Upper lobe of right lung (tissue), 1 donor: ENCODE measurements at regions of chr3 and their contacts with region 1.

Region 1: DNA sequence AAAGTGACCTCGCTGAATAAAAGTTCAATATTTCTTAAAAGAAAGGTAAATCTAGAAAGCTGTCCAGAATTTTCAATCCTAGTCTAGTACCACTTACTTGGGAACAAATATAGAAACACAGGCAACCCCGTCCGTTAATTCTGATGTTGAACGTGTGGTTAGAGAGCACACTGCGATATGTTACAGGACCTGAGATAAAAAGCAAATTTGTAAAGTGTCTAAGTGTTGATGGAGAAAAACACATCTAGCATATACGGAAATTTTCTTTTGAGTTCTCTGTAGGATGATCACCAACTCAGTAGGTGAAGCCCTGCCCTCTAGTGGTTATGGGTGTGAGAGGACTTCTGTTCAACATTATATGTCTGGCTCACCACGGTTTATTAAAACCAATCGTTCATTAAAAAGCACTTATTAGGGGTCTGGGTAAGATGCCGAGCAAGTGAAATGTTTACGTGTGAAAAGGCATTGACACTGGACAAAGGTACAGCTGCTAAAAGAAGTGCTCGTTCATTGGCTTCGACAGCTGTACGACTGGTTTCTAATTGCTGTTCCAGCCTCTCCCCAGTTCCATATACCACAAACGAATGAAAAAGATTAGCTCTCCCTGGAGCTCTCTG is 1.0 kb upstream of the ATP2C1 start:
- DNase-seq: no peak
- ATAC-seq: peak; percentile 73
- H3K4me3 ChIP-seq: peak overlapping the region; percentile 91
- H3K27ac ChIP-seq: peak overlapping the region; percentile 98
- H3K4me1 ChIP-seq: peaks cover 17% of the 10 kb centered on the region
- H3K27me3 ChIP-seq: no peaks in the 10 kb centered on the region
- CTCF ChIP-seq: peak; percentile 87

Region 2: DNA sequence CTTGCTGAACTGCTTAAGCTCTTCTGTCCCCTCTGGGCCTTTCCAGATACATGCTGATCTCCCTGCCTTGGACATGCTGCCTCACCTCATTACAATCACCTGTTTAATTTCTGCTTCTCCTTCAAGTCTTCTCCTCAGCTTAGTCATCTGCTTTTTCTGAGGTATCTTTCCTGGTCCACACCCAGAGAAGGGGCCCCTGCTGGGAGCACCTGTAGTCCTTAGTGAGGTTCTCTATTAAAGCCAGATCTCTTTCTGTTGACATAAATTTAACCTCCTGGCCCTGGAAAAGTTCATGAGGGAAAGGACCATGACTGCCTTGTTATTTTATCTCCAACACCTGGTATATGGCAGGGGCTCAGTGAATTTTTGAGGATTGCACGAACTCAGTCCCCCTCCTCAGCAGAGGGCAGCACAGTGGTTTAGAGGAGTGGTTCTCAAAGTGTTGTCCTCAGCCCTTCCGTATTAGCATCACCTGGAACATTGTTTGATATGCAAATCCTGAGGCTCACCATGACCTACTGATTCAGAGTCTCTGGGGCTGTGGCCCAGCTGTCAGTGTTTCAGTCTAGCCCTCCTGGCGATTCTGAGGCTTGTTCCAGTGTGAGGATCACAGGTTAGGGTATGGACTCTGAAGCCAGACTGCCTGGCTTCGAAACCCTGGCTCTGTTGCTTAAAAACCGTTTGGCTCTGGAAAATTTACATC is 363.2 kb before region 1 on chr3:
- intact Hi-C with region 1: no loop called
- DNase-seq: no peak
- ATAC-seq: no peak
- H3K4me3 ChIP-seq: no peak overlapping the region
- H3K27ac ChIP-seq: no peak overlapping the region
- H3K4me1 ChIP-seq: no peaks in the 10 kb centered on the region
- H3K27me3 ChIP-seq: no peaks in the 10 kb centered on the region
- CTCF ChIP-seq: no peak

Region 3: DNA sequence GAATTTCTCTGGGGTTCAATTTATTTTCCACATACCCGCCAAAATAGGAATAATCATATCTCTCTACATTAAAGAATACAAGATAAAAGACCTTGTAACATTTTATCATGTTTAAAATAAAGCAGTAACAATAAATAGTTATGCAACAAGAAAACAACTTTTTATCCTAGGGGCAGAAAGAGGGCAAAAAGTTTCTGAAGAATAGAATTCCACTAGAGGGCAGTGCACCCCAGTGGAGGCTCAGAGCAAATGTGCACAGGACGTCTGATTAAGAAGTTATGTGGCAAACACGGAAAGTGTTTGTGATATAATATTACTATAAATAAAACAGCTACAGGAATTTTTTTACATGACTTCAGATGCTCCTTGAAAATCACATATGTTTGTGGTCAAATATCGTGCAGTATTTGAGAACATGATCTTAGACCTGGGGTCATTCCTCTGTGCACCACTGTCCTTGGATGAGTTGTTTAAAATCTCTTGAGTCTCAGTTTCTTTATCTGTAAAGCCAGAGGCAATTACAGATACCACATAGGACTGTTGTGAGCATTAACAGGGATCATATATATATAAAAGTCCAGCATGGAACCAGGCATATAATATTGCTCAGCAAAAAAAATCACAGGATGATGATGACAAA is 133.0 kb before region 1 on chr3:
- intact Hi-C with region 1: loop called (anchors 10 kb)
- DNase-seq: no peak
- ATAC-seq: peak; percentile 91
- H3K4me3 ChIP-seq: no peak overlapping the region
- H3K27ac ChIP-seq: no peak overlapping the region
- H3K4me1 ChIP-seq: no peaks in the 10 kb centered on the region
- H3K27me3 ChIP-seq: no peaks in the 10 kb centered on the region
- CTCF ChIP-seq: peak; percentile 86